ENCODE measurements at regions of chr7 and their contacts with region 1.

Region 1: DNA sequence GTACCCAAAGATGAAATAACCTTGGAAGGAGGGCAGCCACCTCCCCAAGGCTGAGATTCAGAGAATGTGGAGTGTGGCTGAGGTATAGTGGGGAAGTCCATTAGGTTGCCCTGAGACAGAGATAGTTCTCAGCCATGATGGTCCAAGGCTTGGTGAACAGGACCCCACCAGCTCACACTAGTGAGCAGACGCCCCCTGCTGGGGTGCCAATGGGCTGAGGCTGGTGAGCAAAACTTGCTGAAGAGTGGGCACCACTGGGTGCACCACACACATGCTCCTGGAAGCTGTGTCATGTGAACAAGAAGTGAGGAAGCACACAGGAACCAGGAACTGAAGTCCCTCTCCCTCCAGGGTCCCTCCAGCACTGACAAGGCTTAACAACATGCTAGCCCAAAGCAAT is 8.9 kb downstream of the FBXL13 start:
- DNase-seq: peak; percentile 53
- H3K4me3 Mint-ChIP-seq: no peak overlapping the region
- H3K27ac Mint-ChIP-seq: no peak overlapping the region
- H3K4me1 Mint-ChIP-seq: no peaks in the 10 kb centered on the region
- H3K27me3 Mint-ChIP-seq: peaks cover 4% of the 10 kb centered on the region

Region 2: DNA sequence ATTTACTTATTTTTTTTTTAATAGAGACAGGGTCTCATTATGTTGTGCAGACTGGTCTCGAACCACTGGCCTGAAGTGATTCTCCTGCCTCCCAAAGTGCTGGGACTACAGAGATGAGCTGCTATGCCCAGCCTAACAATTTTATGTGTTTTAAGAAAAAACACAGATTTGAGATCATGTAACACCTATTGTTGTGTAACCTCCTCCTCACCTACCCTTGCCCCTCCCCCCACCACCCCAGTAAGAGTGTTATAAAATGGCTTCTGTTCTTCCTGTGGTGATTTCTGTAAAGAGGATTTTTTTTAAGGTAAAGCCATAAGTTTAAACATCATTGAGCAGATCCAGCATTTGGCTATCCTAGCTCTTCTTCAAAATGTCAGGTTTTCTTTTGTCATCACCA is 16.8 kb after region 1 on chr7:
- CTCF ChIA-PET with region 1: interaction called, 10 read pairs
- POLR2A ChIA-PET with region 1: no interaction called
- DNase-seq: no peak
- H3K4me3 Mint-ChIP-seq: no peak overlapping the region
- H3K27ac Mint-ChIP-seq: no peak overlapping the region
- H3K4me1 Mint-ChIP-seq: peaks cover 12% of the 10 kb centered on the region
- H3K27me3 Mint-ChIP-seq: no peaks in the 10 kb centered on the region

Region 3: DNA sequence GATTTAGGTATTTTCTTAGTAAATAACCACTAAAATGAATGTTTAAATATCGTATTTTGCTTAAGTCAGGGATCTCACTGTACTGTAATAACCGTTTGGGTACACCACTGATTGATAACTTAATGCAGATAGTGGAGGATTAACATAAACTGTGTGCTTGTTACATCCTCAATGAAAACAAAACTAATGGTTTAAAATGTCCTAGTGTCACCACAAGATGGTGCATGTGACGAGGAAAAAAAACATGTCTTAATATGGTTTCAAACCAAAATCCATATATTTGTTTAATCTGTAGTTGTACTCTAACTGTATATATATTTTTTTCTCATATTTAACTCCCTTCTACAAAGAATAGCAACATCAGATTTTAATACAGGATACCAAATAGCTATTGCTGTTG is 28.4 kb after region 1 on chr7:
- CTCF ChIA-PET with region 1: interaction called, 10 read pairs
- POLR2A ChIA-PET with region 1: no interaction called
- DNase-seq: no peak
- H3K4me3 Mint-ChIP-seq: no peak overlapping the region
- H3K27ac Mint-ChIP-seq: no peak overlapping the region
- H3K4me1 Mint-ChIP-seq: no peaks in the 10 kb centered on the region
- H3K27me3 Mint-ChIP-seq: no peaks in the 10 kb centered on the region

Measured in activated CD4-positive, alpha-beta memory T cell treated with anti-CD3 and anti-CD28 coated beads, Interleukin-2, amount 10 ng/mL, durations not matched to agents 7 days and 5 days (primary cell).